Heart right ventricle (tissue), 16 donors: ENCODE measurements at regions of chr2 and their contacts with region 1.

Region 1: GRCh38 chr2:188524519-188525113 is 232.9 kb downstream of the GULP1 start:
- DNase-seq: peak in 1 of 2 donors; percentile 13
- ATAC-seq: no peak
- H3K4me3 ChIP-seq: no peak overlapping the region
- H3K27ac ChIP-seq: no peak overlapping the region
- H3K4me1 ChIP-seq: peaks cover 0 to 14% (median 0%) of the 10 kb centered on the region in 9 donors
- H3K27me3 ChIP-seq: no peaks in the 10 kb centered on the region
- CTCF ChIP-seq: peak; percentile 60 to 92 (median 75)

Region 2: DNA sequence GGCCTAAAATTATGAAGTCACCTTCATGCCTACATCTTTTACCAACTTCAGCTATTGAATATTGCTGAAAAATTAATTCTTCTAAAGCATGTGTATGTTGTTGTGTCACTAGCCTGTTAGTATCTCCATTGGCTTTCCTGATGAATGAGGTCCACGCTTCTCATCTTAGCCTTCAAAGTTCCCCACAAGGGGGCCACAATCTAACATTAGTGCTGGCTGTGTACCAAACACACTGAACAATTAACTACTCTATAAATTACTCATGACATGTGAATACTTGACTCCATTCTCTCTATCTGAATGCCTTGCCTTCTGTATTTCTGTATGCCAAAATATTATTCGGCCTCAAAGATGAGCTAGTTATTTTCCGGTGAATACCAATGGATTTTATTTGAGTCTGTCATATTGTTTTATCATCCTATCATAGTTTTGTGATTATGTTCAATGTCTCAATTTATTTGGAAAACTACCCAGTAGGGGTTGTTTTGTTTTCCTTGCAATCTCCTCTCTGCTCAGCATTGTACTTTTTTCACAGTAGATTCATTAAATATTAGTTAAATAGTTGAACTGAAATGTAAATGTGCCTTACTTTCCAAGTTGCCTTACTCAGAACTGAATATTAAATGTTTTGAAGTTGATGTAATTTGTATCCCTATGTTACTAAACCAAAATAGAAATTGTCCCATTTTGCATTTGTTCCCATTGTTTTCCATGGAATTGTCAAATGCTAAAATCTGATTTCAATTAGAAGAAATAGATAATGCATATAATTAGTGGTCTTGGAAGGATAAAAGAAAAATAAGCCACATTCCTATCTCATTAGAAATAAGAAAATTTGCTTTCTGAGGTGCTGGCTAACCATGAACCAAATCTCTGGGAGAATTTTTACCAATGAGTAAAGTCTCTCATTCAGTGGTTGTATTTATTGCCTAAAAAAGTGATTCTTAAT is 241.2 kb after region 1 on chr2:
- intact Hi-C with region 1: loop called in 1 of 10 experiments (anchors 10 kb)
- DNase-seq: no peak
- ATAC-seq: no peak
- H3K4me3 ChIP-seq: no peak overlapping the region
- H3K27ac ChIP-seq: no peak overlapping the region
- H3K4me1 ChIP-seq: no peaks in the 10 kb centered on the region
- H3K27me3 ChIP-seq: no peaks in the 10 kb centered on the region
- CTCF ChIP-seq: peak in 6 of 9 donors; percentile 24 to 49 (median 34)

Region 3: DNA sequence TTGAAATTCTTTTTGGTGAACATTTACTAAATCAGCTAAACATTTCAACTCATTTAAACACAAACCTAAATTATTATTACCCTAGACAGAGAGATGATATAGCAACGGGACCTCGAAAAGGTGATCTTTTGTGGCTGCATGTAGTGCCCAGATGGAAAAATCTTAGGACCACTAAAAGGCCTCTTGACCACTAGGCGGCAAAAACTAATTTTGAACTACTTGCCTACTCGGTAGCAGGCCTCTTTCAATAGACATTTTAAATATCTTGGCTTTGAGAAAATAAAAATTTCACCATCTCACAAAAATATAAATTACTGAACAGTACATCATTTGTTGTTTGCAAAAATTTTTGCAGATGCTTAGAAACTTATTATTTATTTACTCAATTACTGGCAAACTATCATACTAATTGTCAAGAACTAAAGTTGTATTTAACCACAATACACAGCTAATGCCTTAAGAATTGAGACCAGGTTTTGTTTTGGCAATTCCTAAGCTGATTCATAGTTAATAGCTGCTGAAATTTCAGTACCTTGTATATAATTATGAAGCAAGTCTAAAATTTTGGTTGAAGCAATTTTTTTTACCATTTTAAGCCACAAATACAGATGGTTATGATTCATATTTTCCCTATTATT is 458.9 kb after region 1 on chr2:
- intact Hi-C with region 1: loop called in 7 of 10 experiments (anchors 5 to 10 kb)
- DNase-seq: no peak
- ATAC-seq: peak in 3 of 8 donors; percentile 12 to 33 (median 13)
- H3K4me3 ChIP-seq: peak overlapping the region in 5 of 10 donors; percentile 0 to 22 (median 4)
- H3K27ac ChIP-seq: peak overlapping the region in 8 of 10 donors; percentile 23 to 74 (median 48)
- H3K4me1 ChIP-seq: peaks cover 0 to 26% (median 0%) of the 10 kb centered on the region in 9 donors
- H3K27me3 ChIP-seq: no peaks in the 10 kb centered on the region
- CTCF ChIP-seq: peak in 7 of 9 donors; percentile 14 to 44 (median 35)

Region 4: DNA sequence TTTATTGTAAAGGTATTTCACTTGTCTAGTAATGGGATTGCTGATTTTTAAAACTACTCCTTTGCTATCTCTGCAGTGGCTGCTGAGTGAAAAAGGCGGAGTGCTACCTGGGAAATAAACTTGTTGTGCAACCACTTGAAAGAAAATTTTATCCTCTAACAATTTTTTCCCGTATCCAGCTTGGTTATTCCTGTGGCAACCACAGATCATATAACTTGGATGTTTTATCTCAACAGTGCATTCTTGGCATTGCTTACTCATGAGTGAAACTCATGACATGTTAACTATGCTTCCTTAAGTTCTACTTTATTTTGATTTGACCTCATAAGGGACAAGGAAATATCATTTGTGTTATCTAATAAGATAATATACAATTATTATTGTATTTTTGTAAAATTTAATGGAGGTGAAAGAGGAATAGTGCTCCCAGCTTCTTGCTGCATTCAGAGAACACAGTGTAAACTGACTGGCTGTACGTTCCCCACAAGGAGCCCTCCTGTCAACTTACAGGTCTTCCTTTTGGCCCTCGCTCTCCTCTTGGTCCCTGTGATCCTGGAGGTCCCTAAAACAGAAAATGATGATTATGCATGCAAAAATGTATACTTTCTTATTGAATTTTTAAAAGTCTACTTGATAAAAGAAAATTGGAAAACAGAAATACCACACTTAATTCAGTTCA is 572.3 kb after region 1 on chr2:
- intact Hi-C with region 1: loop called in 3 of 10 experiments (anchors 10 kb)
- DNase-seq: no peak
- ATAC-seq: no peak
- H3K4me3 ChIP-seq: no peak overlapping the region
- H3K27ac ChIP-seq: no peak overlapping the region
- H3K4me1 ChIP-seq: peaks cover 0 to 28% (median 9%) of the 10 kb centered on the region in 9 donors
- H3K27me3 ChIP-seq: no peaks in the 10 kb centered on the region
- CTCF ChIP-seq: no peak

Region 5: DNA sequence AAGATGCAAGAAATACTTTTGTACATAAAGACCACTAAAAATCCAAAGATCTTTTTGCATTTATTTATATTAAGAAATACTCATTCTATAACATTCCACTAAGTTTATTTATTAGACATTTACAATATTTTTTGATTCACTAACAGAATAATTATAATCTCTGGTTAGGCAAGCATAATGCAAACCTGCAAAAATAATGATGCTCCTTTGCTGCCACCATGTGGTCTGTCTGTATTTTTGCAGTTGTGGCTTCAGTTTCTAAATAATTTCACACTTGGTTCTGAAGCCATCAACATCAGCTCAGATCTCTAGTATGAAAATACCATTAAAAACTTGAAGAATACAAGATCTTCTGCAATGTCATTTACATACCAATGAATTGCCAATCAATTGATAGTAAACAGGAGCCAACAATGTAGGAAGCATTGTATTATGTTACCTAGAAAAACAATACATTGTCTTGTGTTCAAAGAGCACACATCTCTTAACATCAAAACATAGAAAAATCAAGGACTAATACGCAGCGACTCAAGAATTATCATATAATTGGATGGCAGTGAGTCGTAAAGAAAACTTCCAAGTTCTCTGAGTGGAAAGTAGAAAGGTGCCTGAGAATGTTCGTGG is 887.8 kb after region 1 on chr2:
- intact Hi-C with region 1: loop called in 8 of 10 experiments (anchors 2 to 10 kb)
- DNase-seq: peak in 1 of 2 donors; percentile 33
- ATAC-seq: peak in 7 of 8 donors; percentile 35 to 71 (median 62)
- H3K4me3 ChIP-seq: no peak overlapping the region
- H3K27ac ChIP-seq: peak overlapping the region in 5 of 10 donors; percentile 13 to 40 (median 31)
- H3K4me1 ChIP-seq: peaks cover 0 to 16% (median 0%) of the 10 kb centered on the region in 9 donors
- H3K27me3 ChIP-seq: no peaks in the 10 kb centered on the region
- CTCF ChIP-seq: peak; percentile 51 to 83 (median 77)